ENCODE measurements at regions of chr1 and their contacts with region 1.

Region 1: GRCh38 chr1:68103884-68104554 is 53.6 kb upstream of the DIRAS3 start:
- DNase-seq: peak; percentile 46
- H3K4me3 ChIP-seq: no peak overlapping the region
- H3K27ac ChIP-seq: no peak overlapping the region
- H3K4me1 ChIP-seq: no peaks in the 10 kb centered on the region
- H3K27me3 ChIP-seq: no peaks in the 10 kb centered on the region

Region 2: GRCh38 chr1:67005068-67005467 is 1099.0 kb before region 1 on chr1:
- in situ Hi-C with region 1: no loop called
- DNase-seq: no peak
- H3K4me3 ChIP-seq: no peak overlapping the region
- H3K27ac ChIP-seq: no peak overlapping the region
- H3K4me1 ChIP-seq: no peaks in the 10 kb centered on the region
- H3K27me3 ChIP-seq: no peaks in the 10 kb centered on the region

Region 3: DNA sequence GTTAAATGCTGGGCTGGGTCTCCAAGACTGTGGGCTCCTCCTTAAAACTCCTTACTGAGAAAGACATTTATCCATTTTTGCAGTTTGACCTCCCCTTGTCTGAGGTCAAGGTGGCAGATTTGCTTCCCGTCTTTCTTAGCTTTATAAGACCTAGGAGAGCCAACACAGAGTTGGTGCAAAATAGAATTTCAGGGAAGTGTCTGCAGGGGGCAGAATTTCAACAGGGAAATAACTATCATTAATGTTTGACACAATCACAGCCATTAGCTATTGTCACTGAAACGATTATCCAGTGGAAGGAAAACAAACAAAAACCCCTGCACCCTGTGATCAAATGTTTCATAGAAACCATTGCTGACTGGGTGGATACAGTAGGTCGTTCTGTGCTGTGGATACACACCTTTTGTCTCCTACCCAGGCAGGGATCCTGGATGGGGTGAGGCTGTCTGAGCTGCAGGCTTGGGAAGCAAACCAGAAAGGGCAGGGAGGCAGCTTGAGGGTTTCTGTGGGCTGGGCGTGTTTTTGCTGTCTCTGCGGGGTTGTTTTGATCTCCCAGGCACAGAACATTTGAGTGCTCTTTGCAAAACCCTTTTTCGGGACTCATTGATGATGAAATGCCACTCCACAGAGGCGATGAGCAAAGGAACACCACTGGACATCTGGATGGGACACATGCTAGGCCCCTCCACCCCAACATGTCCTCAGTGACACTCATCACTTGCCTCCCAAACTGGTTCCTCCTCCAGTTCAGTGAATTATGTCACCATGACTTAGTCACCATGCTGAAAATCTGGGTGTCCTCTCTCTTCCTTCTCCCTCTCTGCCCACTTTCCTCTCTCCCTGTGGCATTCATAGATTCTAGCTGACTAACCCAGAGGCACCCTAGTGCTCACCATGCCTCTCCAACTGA is 579.6 kb before region 1 on chr1:
- in situ Hi-C with region 1: loop called (anchors 10 kb)
- DNase-seq: peak; percentile 73
- H3K4me3 ChIP-seq: no peak overlapping the region
- H3K27ac ChIP-seq: peak overlapping the region; percentile 60
- H3K4me1 ChIP-seq: peaks cover 12% of the 10 kb centered on the region
- H3K27me3 ChIP-seq: no peaks in the 10 kb centered on the region

Region 4: DNA sequence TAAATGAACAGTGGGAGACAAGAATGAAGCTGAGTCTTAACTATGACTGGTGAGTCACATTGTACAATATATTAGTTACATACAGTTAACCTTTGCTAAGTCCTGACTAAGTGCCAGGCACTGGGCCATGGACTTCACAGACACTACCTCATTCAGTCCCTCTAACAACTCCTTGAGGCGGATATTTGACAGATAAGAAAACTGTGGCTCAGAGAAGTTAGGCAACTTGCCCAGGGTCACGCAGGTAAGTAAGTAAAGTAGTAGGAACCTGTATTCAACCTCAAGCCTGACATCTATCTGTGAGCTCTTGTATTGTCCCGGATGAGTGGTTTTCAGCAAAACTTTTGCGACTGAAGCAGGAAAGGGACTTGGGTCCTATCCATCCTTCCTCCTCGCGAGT is 332.9 kb before region 1 on chr1:
- in situ Hi-C with region 1: loop called (anchors 10 kb)
- DNase-seq: peak; percentile 88
- H3K4me3 ChIP-seq: no peak overlapping the region
- H3K27ac ChIP-seq: peak overlapping the region; percentile 44
- H3K4me1 ChIP-seq: peaks cover 36% of the 10 kb centered on the region
- H3K27me3 ChIP-seq: no peaks in the 10 kb centered on the region

Region 5: DNA sequence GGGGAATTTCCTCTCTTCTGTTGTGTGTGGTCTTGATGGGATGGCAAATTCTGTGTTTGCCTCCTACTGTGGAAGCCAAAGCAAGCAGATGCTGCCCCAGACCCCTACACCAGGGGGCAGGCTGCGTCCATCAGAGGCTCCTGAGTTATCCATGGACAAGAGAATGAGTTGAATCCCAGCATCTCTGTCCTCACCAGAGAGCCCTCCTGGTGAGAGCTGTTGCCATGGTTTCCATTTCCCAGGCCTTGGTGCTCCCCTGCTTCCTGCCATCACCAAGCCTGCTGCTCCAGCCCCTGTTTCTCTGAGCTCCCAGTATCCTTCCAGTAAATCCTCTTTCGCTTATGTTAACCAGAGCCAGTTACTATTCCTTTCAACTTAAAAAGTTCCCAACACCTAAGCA is 250.3 kb before region 1 on chr1:
- in situ Hi-C with region 1: loop called (anchors 5 kb)
- DNase-seq: peak; percentile 86
- H3K4me3 ChIP-seq: no peak overlapping the region
- H3K27ac ChIP-seq: no peak overlapping the region
- H3K4me1 ChIP-seq: peaks cover 10% of the 10 kb centered on the region
- H3K27me3 ChIP-seq: no peaks in the 10 kb centered on the region

Region 6: DNA sequence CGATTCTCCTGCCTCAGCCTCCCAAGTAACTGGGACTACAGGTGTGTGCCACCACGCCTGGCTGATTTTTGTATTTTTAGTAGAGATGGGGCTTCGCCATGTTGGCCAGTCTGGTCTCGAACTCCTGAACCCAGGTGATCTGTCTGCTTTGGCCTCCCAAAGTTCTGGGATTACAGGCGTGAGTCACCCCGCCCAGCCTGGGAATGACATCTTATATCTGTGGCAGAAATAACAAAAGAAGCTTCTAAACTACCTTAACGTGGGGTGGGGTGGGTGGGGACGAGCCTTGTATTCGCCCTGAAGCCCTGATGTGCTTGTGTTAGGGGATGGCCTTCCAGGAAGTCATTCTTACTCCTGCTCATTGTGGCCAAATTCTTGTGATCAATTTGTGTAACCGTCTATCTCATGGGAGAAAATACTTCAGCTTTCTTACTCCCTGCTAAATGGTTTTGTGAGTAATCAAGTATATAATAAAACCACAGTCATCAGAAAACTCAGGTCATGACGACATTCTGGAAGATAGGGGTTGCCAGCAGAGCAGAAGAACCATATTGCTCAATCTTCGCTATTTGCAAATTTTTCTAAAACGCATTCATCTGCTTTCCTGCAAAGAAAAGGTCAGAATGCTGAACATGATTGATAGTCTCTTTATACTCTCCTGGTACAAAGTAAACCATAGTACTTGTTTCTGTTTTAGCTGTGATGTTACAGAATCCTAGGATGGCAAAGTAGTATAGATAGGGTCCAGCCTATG is 116.8 kb before region 1 on chr1:
- in situ Hi-C with region 1: no loop called
- DNase-seq: peak; percentile 93
- H3K4me3 ChIP-seq: no peak overlapping the region
- H3K27ac ChIP-seq: peak overlapping the region; percentile 71
- H3K4me1 ChIP-seq: peaks cover 18% of the 10 kb centered on the region
- H3K27me3 ChIP-seq: no peaks in the 10 kb centered on the region

Region 7: GRCh38 chr1:68057564-68057963 is 46.5 kb before region 1 on chr1:
- in situ Hi-C with region 1: no loop called
- DNase-seq: no peak
- H3K4me3 ChIP-seq: no peak overlapping the region
- H3K27ac ChIP-seq: no peak overlapping the region
- H3K4me1 ChIP-seq: no peaks in the 10 kb centered on the region
- H3K27me3 ChIP-seq: no peaks in the 10 kb centered on the region